PC-3 (cell line): ENCODE measurements at regions of chr2 and their contacts with region 1.

Region 1: DNA sequence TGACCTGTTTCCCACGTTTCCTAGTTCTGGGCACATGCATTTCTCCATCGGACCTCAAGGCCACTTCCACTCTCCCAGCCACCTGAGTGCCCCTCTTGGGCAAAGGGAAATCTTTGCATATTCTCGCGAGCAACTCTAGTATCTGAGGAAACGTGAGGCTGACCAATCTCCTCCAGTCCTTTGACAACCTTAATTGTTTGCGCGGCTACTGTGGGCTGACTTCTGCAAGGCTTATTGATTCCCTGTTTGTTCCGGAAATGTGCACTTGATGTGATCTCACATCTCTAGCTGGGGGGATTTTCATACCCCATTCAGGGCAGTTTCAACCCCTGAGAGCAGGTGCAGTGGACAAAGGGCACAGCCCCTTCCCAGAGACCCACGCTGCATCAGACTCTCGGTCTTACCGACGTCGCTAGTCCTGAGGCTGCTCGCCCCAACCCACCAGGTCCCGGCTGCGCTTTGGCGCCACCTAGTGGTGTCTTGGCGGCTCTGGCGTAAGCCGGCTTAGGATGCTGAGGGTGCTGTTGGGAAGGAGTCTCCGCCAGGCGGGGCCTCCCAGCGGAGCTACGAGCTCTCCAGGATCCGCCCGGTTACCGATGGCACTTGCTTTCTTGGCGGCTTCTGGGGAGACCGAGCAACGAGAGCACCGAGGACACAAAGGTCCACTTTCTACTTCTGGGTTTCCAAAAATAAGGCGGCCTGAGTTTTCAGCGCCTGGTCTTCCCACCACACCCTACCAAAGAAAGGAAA is 24.8 kb upstream of the SPR start:
- DNase-seq: peak; percentile 97
- ATAC-seq: peak; percentile 96
- H3K4me3 ChIP-seq: peak overlapping the region; percentile 71
- H3K27ac ChIP-seq: no peak overlapping the region
- H3K4me1 ChIP-seq: peaks cover 19% of the 10 kb centered on the region
- H3K27me3 ChIP-seq: 0 out of 2 replicates have a peak, but pooled peaks cover 7% of the 10 kb centered on the region
- CTCF ChIP-seq: peak; percentile 97

Region 2: GRCh38 chr2:72770879-72771461 is 91.4 kb before region 1 on chr2:
- CTCF ChIA-PET with region 1: interaction called, 3 read pairs
- POLR2A ChIA-PET with region 1: no interaction called
- intact Hi-C with region 1: loop called (anchors 1 kb)
- DNase-seq: peak; percentile 92
- ATAC-seq: peak; percentile 59
- H3K4me3 ChIP-seq: no peak overlapping the region
- H3K27ac ChIP-seq: no peak overlapping the region
- H3K4me1 ChIP-seq: peaks cover 4% of the 10 kb centered on the region
- H3K27me3 ChIP-seq: no peaks in the 10 kb centered on the region
- CTCF ChIP-seq: peak; percentile 89

Region 3: GRCh38 chr2:72915907-72916742 is 53.7 kb after region 1 on chr2:
- CTCF ChIA-PET with region 1: no interaction called
- POLR2A ChIA-PET with region 1: no interaction called
- intact Hi-C with region 1: no loop called
- DNase-seq: peak; percentile 58
- ATAC-seq: peak; percentile 36
- H3K4me3 ChIP-seq: peak overlapping the region; percentile 60
- H3K27ac ChIP-seq: no peak overlapping the region
- H3K4me1 ChIP-seq: peaks cover 25% of the 10 kb centered on the region; the same call in 1 of the 2 replicates
- H3K27me3 ChIP-seq: peaks cover 89% of the 10 kb centered on the region
- CTCF ChIP-seq: no peak